Mammary epithelial cell (primary cell): ENCODE measurements at regions of chr2 and their contacts with region 1.

Region 1: GRCh38 chr2:159035790-159036411 is 67.5 kb downstream of the TANC1 start:
- DNase-seq: peak; percentile 86
- H3K4me3 ChIP-seq: no peak overlapping the region
- H3K27ac ChIP-seq: no peak overlapping the region
- H3K4me1 ChIP-seq: peaks cover 9% of the 10 kb centered on the region
- H3K27me3 ChIP-seq: no peaks in the 10 kb centered on the region
- CTCF ChIP-seq: peak; percentile 56 to 76

Region 2: DNA sequence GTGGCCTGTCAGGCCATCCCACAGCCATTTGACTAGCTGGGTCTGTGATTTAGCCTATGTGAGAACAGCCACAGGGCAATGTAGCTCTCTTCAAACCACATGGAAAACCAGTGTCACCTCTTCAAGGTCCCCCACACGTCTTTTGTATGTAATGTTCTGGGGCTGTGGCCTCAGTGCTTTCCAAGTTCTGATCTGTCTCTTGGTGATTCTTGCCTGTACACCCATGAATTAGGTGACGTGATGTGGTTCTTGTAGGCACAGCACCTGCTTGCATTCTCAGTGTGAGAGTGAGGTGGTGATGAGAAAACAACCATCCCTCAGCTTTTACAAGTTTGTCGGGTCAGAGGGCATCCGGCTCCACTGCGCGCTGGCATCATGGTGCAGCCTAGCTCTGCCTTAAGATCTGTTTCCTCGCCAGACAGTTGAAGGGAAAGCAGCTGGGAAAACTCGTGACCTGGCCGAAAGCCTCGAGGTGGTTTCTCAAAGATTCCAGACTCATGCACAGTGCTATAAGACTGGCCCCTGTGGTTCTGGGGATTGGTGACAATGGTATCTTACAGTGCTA is 58.4 kb after region 1 on chr2:
- CTCF ChIA-PET with region 1: no interaction called
- dilution Hi-C with region 1: no loop called
- in situ Hi-C with region 1: no loop called
- intact Hi-C with region 1: no loop called
- DNase-seq: no peak
- H3K4me3 ChIP-seq: no peak overlapping the region
- H3K27ac ChIP-seq: no peak overlapping the region
- H3K4me1 ChIP-seq: peaks cover 59% of the 10 kb centered on the region
- H3K27me3 ChIP-seq: no peaks in the 10 kb centered on the region
- CTCF ChIP-seq: no peak

Region 3: DNA sequence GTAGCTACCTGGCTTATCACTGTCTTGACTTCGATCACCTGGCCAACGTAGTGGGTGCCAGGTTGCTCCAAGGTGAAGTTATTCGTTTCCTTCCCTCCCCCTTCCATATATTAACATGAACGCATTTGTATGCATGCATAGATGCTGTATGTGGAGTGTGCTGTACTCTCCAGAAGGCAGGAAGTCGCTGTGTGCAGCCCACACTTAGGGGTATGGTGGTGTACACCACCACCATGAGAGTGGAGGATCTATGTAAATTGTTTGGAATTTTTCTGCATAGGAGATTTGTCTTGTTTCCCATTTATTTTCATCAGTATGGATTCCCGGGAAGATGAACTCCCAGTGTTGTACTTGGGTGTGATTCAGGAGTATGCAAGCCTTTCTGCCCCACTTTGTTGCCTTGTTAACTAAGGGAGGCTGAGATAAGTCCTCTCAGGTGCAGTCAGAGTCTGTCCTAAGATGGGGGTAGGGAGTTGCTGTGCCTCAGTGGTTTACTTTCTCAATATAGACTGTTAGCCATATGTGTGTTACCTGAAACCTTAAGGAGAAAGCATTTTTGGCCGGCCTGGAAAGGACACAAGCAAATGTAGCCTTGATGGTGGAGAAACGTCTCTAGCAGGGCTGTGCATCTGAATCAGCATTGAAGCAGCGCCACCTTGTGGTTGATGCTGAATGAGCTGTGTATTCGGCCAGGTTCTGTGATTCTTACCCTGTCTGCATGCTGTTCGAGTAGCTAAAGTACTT is 82.4 kb after region 1 on chr2:
- CTCF ChIA-PET with region 1: interaction called, 27 read pairs
- dilution Hi-C with region 1: no loop called
- in situ Hi-C with region 1: loop called (anchors 5 to 10 kb)
- intact Hi-C with region 1: loop called (anchors 1 kb)
- DNase-seq: peak; percentile 71
- H3K4me3 ChIP-seq: no peak overlapping the region
- H3K27ac ChIP-seq: no peak overlapping the region
- H3K4me1 ChIP-seq: peaks cover 7% of the 10 kb centered on the region
- H3K27me3 ChIP-seq: no peaks in the 10 kb centered on the region
- CTCF ChIP-seq: peak; percentile 92 to 96

Region 4: GRCh38 chr2:159185401-159186130 is 149.7 kb after region 1 on chr2:
- CTCF ChIA-PET with region 1: interaction called, 3 read pairs
- dilution Hi-C with region 1: no loop called
- in situ Hi-C with region 1: no loop called
- intact Hi-C with region 1: loop called (anchors 10 kb)
- DNase-seq: no peak
- H3K4me3 ChIP-seq: no peak overlapping the region
- H3K27ac ChIP-seq: no peak overlapping the region
- H3K4me1 ChIP-seq: no peaks in the 10 kb centered on the region
- H3K27me3 ChIP-seq: no peaks in the 10 kb centered on the region
- CTCF ChIP-seq: peak; percentile 28 to 42